ENCODE measurements at regions of chr14 and their contacts with region 1.

Region 1: DNA sequence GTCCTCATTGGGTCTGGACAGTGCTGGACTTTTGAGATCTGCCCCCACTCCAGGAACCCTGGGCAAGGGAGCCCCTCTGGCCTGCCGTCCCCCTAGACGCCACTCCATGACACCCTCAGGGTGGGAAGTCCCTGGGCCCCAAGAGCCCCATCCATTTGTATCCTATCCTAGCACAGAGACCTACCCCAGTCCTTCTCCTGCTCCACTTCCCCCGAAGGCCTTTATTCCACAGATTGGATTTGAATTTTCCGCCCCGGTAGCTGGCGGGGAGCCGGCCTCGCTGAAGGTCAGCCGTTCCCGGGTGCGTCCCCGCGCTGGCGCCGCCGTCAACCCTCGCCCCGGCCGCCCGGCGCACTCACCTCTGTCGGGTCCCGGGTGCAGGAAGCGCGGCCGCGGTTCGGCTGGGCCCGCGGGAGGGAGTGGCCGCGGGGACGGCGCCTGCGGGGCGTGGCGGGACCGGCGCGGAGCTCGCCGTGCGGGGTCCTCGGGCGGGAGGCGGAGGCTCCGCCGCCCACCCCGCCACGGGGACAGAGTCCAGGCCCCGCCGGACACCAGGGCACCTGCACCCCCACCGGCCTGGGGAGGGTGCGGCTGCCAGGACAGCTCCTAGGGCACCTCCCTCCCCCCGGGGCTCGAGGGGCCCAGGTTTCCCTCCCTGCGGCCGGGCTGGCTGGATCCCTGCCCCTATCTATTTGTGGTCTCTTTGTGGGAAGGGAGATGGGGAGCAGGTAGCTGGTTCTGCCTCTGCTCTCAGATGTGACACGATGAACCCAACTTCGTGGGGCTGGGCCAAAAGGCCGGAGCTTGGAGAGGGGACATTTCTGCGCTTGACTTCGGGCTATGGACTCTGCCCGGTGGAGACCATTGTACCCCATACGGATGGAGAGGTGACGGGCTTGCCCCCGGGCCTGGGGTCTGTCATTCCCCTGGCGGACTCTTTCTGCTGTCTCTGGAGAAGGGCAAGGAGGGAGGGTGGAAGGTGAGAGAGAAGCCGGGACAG is 19.9 kb upstream of the GPR68 start:
- DNase-seq: peak in 5 of 14 experiments; percentile 30 to 65 (median 48)
- ATAC-seq: peak; percentile 50
- H3K4me3 ChIP-seq: peak overlapping the region; percentile 37
- H3K4me3 Mint-ChIP-seq: peak overlapping the region; percentile 75
- H3K27ac ChIP-seq: peak overlapping the region in 1 of 2 donors; percentile 29
- H3K27ac Mint-ChIP-seq: peak overlapping the region; percentile 24
- H3K4me1 ChIP-seq: peaks cover 42% of the 10 kb centered on the region
- H3K4me1 Mint-ChIP-seq: peaks cover 58% of the 10 kb centered on the region
- H3K27me3 ChIP-seq: no peaks in the 10 kb centered on the region
- H3K27me3 Mint-ChIP-seq: no peaks in the 10 kb centered on the region
- CTCF ChIP-seq: no peak

Region 2: GRCh38 chr14:91249841-91250616 is 14.4 kb before region 1 on chr14:
- CTCF ChIA-PET with region 1: interaction called, 4 read pairs
- POLR2A ChIA-PET with region 1: interaction called, 178 read pairs
- intact Hi-C with region 1: no loop called
- DNase-seq: peak in 7 of 14 experiments; percentile 27 to 81 (median 52)
- ATAC-seq: no peak
- H3K4me3 ChIP-seq: no peak overlapping the region
- H3K4me3 Mint-ChIP-seq: peak overlapping the region; percentile 79
- H3K27ac ChIP-seq: peak overlapping the region; percentile 59 to 68
- H3K27ac Mint-ChIP-seq: peak overlapping the region; percentile 78
- H3K4me1 ChIP-seq: peaks cover 96% of the 10 kb centered on the region
- H3K4me1 Mint-ChIP-seq: peaks cover 87% of the 10 kb centered on the region
- H3K27me3 ChIP-seq: no peaks in the 10 kb centered on the region
- H3K27me3 Mint-ChIP-seq: no peaks in the 10 kb centered on the region
- CTCF ChIP-seq: no peak

Measured in CD4-positive, alpha-beta T cell (primary cell).